ENCODE measurements at regions of chr11 and their contacts with region 1.

Region 1: GRCh38 chr11:118592616-118593367 is 14.6 kb upstream of the PHLDB1 start:
- DNase-seq: no peak
- H3K4me3 Mint-ChIP-seq: no peak overlapping the region
- H3K27ac Mint-ChIP-seq: no peak overlapping the region
- H3K4me1 Mint-ChIP-seq: peaks cover 9% of the 10 kb centered on the region
- H3K27me3 Mint-ChIP-seq: no peaks in the 10 kb centered on the region

Region 2: DNA sequence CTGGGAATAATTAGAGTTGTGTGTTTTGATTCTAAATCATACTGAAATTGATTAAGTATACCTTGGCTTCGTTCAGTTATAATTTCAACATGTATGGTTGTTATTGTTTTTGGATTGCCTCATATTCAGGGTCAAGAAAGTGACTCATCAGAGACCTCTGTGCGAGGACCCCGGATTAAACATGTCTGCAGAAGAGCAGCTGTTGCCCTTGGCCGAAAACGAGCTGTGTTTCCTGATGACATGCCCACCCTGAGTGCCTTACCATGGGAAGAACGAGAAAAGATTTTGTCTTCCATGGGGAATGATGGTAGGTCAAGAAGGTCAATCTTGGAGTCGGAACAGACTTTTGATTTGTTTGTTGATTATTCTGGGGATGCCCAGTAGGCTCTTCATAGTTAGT is 116.1 kb before region 1 on chr11:
- intact Hi-C with region 1: no loop called
- DNase-seq: no peak
- H3K4me3 Mint-ChIP-seq: no peak overlapping the region
- H3K27ac Mint-ChIP-seq: no peak overlapping the region
- H3K4me1 Mint-ChIP-seq: peaks cover 13% of the 10 kb centered on the region
- H3K27me3 Mint-ChIP-seq: no peaks in the 10 kb centered on the region

Region 3: GRCh38 chr11:118610804-118611795 is 18.3 kb after region 1 on chr11:
- intact Hi-C with region 1: loop called (anchors 1 kb)
- DNase-seq: peak; percentile 73
- H3K4me3 Mint-ChIP-seq: peak overlapping the region; percentile 50
- H3K27ac Mint-ChIP-seq: no peak overlapping the region
- H3K4me1 Mint-ChIP-seq: peaks cover 23% of the 10 kb centered on the region
- H3K27me3 Mint-ChIP-seq: peaks cover 23% of the 10 kb centered on the region

Region 4: GRCh38 chr11:118659314-118659952 is 66.6 kb after region 1 on chr11:
- intact Hi-C with region 1: loop called (anchors 1 kb)
- DNase-seq: peak; percentile 74
- H3K4me3 Mint-ChIP-seq: no peak overlapping the region
- H3K27ac Mint-ChIP-seq: no peak overlapping the region
- H3K4me1 Mint-ChIP-seq: no peaks in the 10 kb centered on the region
- H3K27me3 Mint-ChIP-seq: peaks cover 9% of the 10 kb centered on the region